ENCODE measurements at regions of chr6 and their contacts with region 1.

Region 1: DNA sequence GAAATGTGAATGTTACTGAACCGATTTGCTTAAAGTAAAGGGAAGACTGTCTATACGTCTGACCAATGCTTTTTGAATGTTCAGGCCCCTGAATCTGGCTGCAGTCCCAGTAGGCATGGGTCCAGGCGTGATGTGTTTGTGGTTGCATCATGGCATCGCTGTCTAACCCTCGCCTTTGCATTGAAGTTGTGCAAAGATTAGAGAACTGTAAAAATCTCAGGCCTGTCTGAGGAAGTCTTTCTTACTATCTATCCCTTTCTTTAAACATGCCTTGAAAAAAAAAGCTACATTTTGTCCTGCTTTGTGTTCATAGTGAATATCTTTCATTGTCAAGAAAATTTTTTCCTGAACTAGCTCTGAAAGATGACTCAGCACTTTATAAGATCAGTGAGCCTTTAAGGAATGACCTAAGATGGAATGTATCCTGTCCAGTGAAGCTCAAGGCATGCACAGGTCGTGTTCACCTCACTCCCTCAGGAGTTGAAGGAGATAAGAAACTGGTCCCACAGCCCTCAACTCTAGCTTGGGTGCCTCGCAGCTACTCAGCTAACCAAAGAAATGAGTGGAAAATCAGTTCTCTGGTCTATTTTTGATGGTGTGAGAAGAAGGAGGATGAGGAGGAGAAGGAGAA is 48.5 kb downstream of the TPD52L1 start:
- DNase-seq: no peak
- ATAC-seq: no peak
- H3K4me3 ChIP-seq: no peak overlapping the region
- H3K27ac ChIP-seq: no peak overlapping the region
- H3K4me1 ChIP-seq: no peaks in the 10 kb centered on the region
- H3K27me3 ChIP-seq: no peaks in the 10 kb centered on the region
- CTCF ChIP-seq: no peak
- EP300 ChIP-seq: no peak
- POLR2A ChIP-seq: no peak
- RAD21 ChIP-seq: no peak

Region 2: GRCh38 chr6:125191916-125192609 is 10.0 kb before region 1 on chr6:
- CTCF ChIA-PET with region 1: interaction called, 31 read pairs
- POLR2A ChIA-PET with region 1: no interaction called
- RAD21 ChIA-PET with region 1: no interaction called
- SMC1A ChIA-PET with region 1: no interaction called
- in situ Hi-C with region 1: no loop called
- intact Hi-C with region 1: no loop called
- DNase-seq: peak; percentile 7
- ATAC-seq: peak; percentile 97
- H3K4me3 ChIP-seq: no peak overlapping the region
- H3K27ac ChIP-seq: no peak overlapping the region
- H3K4me1 ChIP-seq: no peaks in the 10 kb centered on the region
- H3K27me3 ChIP-seq: no peaks in the 10 kb centered on the region
- CTCF ChIP-seq: peak; percentile 75 to 83 (median 75)
- EP300 ChIP-seq: no peak
- POLR2A ChIP-seq: no peak
- RAD21 ChIP-seq: peak; percentile 41; the same call in 1 of the 2 replicates

Measured in GM12878 (cell line).